CD4-positive, alpha-beta T cell (primary cell): ENCODE measurements at regions of chr15 and their contacts with region 1.

Region 1: GRCh38 chr15:45118131-45118588 is 4.0 kb downstream of the DUOXA2 start:
- DNase-seq: peak; percentile 70 to 91 (median 80)
- ATAC-seq: peak; percentile 99
- H3K4me3 ChIP-seq: peak overlapping the region; percentile 29
- H3K4me3 Mint-ChIP-seq: peak overlapping the region; percentile 88
- H3K27ac ChIP-seq: no peak overlapping the region
- H3K27ac Mint-ChIP-seq: no peak overlapping the region
- H3K4me1 ChIP-seq: peaks cover 39% of the 10 kb centered on the region
- H3K4me1 Mint-ChIP-seq: peaks cover 43% of the 10 kb centered on the region
- H3K27me3 ChIP-seq: peaks cover 58 to 59% of the 10 kb centered on the region in 2 experiments
- H3K27me3 Mint-ChIP-seq: peaks cover 80% of the 10 kb centered on the region
- CTCF ChIP-seq: peak; percentile 100

Region 2: DNA sequence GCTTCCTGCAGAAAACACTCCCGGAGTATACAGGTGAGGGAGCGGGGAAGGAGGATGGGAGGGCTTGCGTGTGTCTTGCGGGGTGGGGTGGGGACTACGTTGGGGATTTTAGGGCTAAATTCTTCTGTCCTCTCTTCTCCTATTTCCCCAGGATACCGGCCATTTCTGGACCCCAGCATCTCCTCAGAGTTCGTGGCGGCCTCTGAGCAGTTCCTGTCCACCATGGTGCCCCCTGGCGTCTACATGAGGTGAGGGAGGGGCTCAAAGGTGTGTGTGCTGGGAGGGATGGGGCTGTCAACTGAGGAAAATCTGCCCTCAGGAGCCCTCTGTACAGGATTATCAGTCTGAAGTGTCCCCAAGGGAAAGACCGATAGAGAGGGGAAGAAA is 18.2 kb after region 1 on chr15:
- CTCF ChIA-PET with region 1: interaction called, 11 read pairs
- POLR2A ChIA-PET with region 1: no interaction called
- intact Hi-C with region 1: no loop called
- DNase-seq: peak in 4 of 14 experiments; percentile 9 to 46 (median 39)
- ATAC-seq: peak; percentile 43
- H3K4me3 ChIP-seq: no peak overlapping the region
- H3K4me3 Mint-ChIP-seq: peak overlapping the region; percentile 68
- H3K27ac ChIP-seq: no peak overlapping the region
- H3K27ac Mint-ChIP-seq: no peak overlapping the region
- H3K4me1 ChIP-seq: peaks cover 18% of the 10 kb centered on the region
- H3K4me1 Mint-ChIP-seq: peaks cover 16% of the 10 kb centered on the region
- H3K27me3 ChIP-seq: peaks cover 32 to 36% of the 10 kb centered on the region in 2 experiments
- H3K27me3 Mint-ChIP-seq: peaks cover 52% of the 10 kb centered on the region
- CTCF ChIP-seq: peak; percentile 33

Region 3: DNA sequence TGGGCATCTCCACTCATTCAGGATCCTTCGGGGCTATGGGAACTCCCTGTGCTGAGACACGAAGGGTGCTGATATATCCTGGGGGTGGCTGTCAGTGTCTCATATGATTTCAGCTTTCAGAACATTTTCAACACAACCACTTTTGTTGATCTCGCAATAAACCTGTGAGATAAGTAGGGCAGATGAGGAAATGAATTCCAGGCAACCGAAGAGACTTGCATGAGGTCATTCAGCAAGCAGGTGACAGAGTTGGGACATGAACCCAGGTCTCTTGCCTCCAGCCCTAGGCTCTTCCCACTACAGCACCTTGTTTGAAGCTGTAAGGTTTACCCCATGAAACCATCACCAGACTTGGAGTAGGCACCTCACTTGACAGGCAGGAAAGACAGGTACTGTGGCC is 28.2 kb after region 1 on chr15:
- CTCF ChIA-PET with region 1: no interaction called
- POLR2A ChIA-PET with region 1: no interaction called
- intact Hi-C with region 1: no loop called
- DNase-seq: no peak
- ATAC-seq: no peak
- H3K4me3 ChIP-seq: no peak overlapping the region
- H3K4me3 Mint-ChIP-seq: no peak overlapping the region
- H3K27ac ChIP-seq: no peak overlapping the region
- H3K27ac Mint-ChIP-seq: no peak overlapping the region
- H3K4me1 ChIP-seq: no peaks in the 10 kb centered on the region
- H3K4me1 Mint-ChIP-seq: no peaks in the 10 kb centered on the region
- H3K27me3 ChIP-seq: no peaks in the 10 kb centered on the region
- H3K27me3 Mint-ChIP-seq: no peaks in the 10 kb centered on the region
- CTCF ChIP-seq: no peak

Region 4: DNA sequence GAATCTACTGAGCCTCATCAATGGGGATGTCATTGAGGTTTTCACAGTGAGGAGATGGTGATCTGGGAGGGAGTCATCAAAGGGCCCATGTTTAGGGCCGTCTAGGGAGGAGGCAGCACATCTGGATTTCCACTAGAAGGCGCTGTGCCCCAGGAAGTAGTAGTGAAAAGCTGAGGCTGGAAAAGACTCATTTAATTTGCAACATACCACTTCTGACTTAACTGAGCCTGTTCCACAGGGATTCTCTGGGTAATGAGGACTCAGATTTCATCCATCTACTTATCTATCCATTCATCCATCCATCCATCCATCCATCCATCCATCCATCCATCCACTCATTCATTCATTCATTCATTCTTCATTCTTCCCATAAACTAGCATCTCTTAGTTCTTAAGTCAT is 87.0 kb after region 1 on chr15:
- CTCF ChIA-PET with region 1: interaction called, 13 read pairs
- POLR2A ChIA-PET with region 1: interaction called, 10 read pairs
- intact Hi-C with region 1: loop called in 1 of 2 experiments (anchors 5 kb)
- DNase-seq: peak in 12 of 14 experiments; percentile 26 to 82 (median 48)
- ATAC-seq: peak; percentile 9
- H3K4me3 ChIP-seq: no peak overlapping the region
- H3K4me3 Mint-ChIP-seq: peak overlapping the region; percentile 23
- H3K27ac ChIP-seq: no peak overlapping the region
- H3K27ac Mint-ChIP-seq: peak overlapping the region; percentile 37
- H3K4me1 ChIP-seq: peaks cover 18% of the 10 kb centered on the region
- H3K4me1 Mint-ChIP-seq: no peaks in the 10 kb centered on the region
- H3K27me3 ChIP-seq: no peaks in the 10 kb centered on the region
- H3K27me3 Mint-ChIP-seq: peaks cover 10% of the 10 kb centered on the region
- CTCF ChIP-seq: peak; percentile 48